ENCODE measurements at regions of chr1 and their contacts with region 1.

Region 1: DNA sequence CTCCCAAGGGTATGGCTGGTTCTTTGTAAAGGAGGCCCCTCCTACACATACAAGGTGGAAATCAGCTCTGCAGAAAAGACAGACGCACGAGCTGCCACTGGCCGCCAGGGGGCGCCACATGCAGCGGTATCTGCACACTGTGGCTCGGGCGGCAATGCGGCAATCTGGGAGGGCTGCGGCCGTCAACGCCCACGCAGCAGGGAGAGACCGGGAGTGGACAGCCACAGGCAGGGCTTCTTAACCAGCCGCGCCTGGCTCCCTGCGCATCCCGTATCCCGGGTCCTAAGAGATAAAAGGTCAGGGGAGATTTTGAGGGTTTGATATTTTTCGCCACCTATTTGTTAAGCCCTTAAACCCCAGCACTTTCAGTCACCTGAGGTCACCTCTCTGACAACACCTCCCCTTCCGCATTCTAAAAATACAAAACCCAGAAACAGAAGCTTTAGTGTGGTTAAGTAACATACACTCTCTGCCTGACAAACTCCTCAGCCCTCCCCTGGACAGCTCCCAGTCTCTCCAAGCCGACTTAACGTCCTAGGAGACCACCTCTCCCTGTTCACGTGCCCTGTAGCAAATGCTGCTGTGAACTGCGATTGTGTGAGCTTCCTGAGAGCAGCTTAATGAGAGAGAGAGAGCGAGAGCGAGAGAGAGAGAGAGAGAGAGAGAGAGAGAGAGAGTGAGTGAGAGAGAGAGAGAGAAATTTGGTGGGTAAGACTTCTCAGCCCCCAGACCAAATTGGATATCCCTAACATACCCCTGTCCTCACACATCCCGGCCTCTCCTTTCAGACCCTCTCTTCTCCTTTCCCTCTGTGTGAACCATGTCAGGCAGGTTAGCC is 13.5 kb upstream of the KCNA2 start:
- DNase-seq: peak; percentile 93
- ATAC-seq: peak; percentile 90
- H3K4me3 Mint-ChIP-seq: peak overlapping the region; percentile 82
- H3K27ac Mint-ChIP-seq: peak overlapping the region; percentile 93
- H3K4me1 Mint-ChIP-seq: peaks cover 50% of the 10 kb centered on the region
- H3K27me3 Mint-ChIP-seq: peaks cover under 1% of the 10 kb centered on the region

Region 2: DNA sequence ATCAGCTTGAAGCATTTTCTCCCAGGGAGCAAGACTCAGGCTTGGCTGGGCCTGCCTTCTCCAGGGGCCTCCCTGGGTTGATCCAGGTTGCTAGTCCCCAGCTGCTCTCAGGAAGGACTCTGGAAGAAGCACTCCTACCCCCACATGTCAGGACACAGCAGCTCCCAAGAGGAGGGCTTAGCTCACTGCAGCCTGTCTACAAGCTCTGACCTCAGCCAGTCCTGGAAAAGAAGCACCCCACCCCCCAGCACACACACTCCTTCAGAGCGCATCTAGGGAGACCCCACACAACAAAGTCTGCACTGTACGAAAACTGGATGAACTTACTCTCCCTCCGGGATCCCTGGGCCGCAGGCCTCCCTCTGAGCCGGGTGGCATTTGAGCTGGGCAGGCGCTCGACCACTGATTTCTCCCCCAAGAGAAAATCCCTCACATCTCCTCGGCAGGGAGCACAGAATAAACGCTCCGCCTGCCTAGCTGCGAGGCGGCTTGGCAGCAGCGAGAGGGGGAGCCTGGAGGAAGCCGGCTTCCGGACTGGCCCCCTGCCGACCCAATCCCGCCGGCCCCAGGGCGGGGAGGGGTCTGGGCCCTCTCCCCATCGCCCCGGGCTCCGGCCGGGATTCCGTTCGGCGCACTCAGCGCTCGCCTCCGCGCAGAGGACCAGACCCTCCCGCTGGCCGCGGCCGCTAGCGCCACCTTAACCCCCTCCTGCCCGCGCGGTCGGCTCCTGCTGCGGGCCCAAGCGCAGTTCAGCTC is 13.6 kb before region 1 on chr1 and contains the start of gene KCNA2:
- CTCF ChIA-PET with region 1: interaction called, 47 read pairs
- POLR2A ChIA-PET with region 1: no interaction called
- DNase-seq: no peak
- ATAC-seq: peak; percentile 53
- H3K4me3 Mint-ChIP-seq: peak within 1 kb of the TSS; percentile 66
- H3K27ac Mint-ChIP-seq: no peak within 1 kb of the TSS
- H3K4me1 Mint-ChIP-seq: peaks cover 25% of the 10 kb centered on the region
- H3K27me3 Mint-ChIP-seq: peaks cover 56% of the 10 kb centered on the region
- total RNA-seq, gene KCNA2: 1.4 to 2.2 TPM

Region 3: DNA sequence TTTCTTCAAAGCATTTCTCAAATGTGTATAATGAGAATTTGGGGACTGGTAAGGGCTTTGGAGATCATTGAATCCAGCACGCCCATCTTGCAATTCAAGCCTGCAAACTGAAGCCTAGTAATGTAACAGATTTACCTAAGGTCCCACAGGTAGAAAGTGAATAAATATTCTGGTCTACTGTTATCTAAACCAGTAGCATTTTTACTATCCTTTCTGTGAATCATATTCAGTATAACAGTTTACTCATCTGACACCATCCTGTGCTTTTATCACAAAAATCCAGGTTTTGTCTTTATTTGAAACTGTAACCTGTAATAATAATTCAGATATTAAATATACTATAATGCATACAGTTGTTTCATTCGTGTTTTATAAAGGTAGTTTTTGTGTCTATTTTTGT is 37.7 kb after region 1 on chr1:
- CTCF ChIA-PET with region 1: interaction called, 11 read pairs
- POLR2A ChIA-PET with region 1: no interaction called
- DNase-seq: no peak
- ATAC-seq: no peak
- H3K4me3 Mint-ChIP-seq: no peak overlapping the region
- H3K27ac Mint-ChIP-seq: no peak overlapping the region
- H3K4me1 Mint-ChIP-seq: peaks cover 21% of the 10 kb centered on the region
- H3K27me3 Mint-ChIP-seq: no peaks in the 10 kb centered on the region

Region 4: GRCh38 chr1:110674337-110675059 is 54.9 kb after region 1 on chr1 and contains the start of gene KCNA3:
- CTCF ChIA-PET with region 1: interaction called, 60 read pairs
- POLR2A ChIA-PET with region 1: interaction called, 51 read pairs
- DNase-seq: peak; percentile 77
- ATAC-seq: peak; percentile 43
- H3K4me3 Mint-ChIP-seq: peak within 1 kb of the TSS; percentile 95
- H3K27ac Mint-ChIP-seq: peak within 1 kb of the TSS; percentile 91
- H3K4me1 Mint-ChIP-seq: peaks cover 33% of the 10 kb centered on the region
- H3K27me3 Mint-ChIP-seq: no peaks in the 10 kb centered on the region
- total RNA-seq, gene KCNA3: 49.0 to 49.3 TPM

Region 5: GRCh38 chr1:110756506-110756905 is 136.9 kb after region 1 on chr1:
- CTCF ChIA-PET with region 1: interaction called, 231 read pairs
- POLR2A ChIA-PET with region 1: no interaction called
- DNase-seq: no peak
- ATAC-seq: no peak
- H3K4me3 Mint-ChIP-seq: no peak overlapping the region
- H3K27ac Mint-ChIP-seq: no peak overlapping the region
- H3K4me1 Mint-ChIP-seq: no peaks in the 10 kb centered on the region
- H3K27me3 Mint-ChIP-seq: peaks cover 32% of the 10 kb centered on the region

Region 6: DNA sequence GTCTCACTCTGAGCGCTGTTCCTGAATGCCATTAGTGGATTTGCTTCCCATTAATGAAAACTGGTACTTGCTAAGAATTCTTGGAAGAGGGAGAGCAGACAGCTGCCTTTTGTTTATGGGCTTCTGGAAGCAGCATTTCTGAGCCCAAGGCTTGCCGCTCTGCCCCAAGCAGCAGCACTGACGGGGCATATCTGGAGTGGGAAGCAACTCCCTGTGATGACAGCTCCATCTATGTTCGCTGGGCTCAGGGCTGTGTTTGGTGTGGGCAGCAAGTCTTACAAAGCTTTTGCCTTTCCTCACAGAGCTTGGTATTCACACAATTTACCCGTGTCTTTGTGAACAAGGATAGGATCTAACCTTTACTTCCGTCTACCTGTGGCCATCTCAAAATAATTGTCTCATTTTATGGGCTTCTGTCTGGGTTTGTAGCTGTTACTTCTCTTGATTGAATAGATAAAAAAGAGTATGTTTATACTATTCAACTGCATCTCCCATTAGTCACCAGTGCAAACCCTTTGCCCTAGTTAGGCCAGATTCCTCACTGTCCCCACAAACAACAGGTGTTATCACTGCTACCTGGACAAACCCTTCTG is 1208.4 kb after region 1 on chr1:
- CTCF ChIA-PET with region 1: no interaction called
- POLR2A ChIA-PET with region 1: no interaction called
- DNase-seq: no peak
- ATAC-seq: no peak
- H3K4me3 Mint-ChIP-seq: no peak overlapping the region
- H3K27ac Mint-ChIP-seq: no peak overlapping the region
- H3K4me1 Mint-ChIP-seq: no peaks in the 10 kb centered on the region
- H3K27me3 Mint-ChIP-seq: peaks cover 23% of the 10 kb centered on the region

Measured in activated CD8-positive, alpha-beta T cell treated with anti-CD3 and anti-CD28 coated beads, Interleukin-2, amount 10 ng/mL, durations not matched to agents 7 days and 5 days (primary cell).